ENCODE measurements at regions of chr18 and their contacts with region 1.

Region 1: GRCh38 chr18:45910405-45911023 is 56.6 kb downstream of the EPG5 start:
- DNase-seq: peak; percentile 47
- H3K4me3 ChIP-seq: no peak overlapping the region
- H3K27ac ChIP-seq: no peak overlapping the region
- H3K4me1 ChIP-seq: no peaks in the 10 kb centered on the region
- H3K27me3 ChIP-seq: no peaks in the 10 kb centered on the region
- CTCF ChIP-seq: peak in 3 of 4 experiments; percentile 62 to 81 (median 74)
- POLR2A ChIP-seq: no peak

Region 2: DNA sequence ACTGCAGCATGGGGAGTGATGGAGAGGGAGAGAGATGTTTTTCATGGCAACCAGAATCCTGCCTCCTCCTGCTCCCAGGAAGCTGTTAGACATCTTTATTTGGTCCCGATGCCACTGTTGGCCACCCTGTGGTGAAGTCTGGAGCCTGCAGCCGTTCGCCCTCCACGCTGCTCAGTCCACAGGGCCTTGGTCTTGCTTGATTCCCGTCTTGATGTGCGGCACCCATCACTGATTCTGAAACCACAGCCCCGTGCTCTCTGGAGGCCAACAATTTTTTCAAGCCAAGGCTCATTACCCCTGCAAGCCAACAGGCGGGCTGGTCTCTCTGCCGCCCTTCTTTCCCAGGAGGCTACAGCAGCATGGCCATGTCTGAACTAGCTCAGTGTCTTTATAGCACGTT is 60.5 kb before region 1 on chr18:
- intact Hi-C with region 1: loop called (anchors 10 kb)
- DNase-seq: no peak
- H3K4me3 ChIP-seq: no peak overlapping the region
- H3K27ac ChIP-seq: no peak overlapping the region
- H3K4me1 ChIP-seq: no peaks in the 10 kb centered on the region
- H3K27me3 ChIP-seq: no peaks in the 10 kb centered on the region
- CTCF ChIP-seq: peak in 3 of 4 experiments; percentile 11 to 33 (median 17)
- POLR2A ChIP-seq: no peak

Region 3: DNA sequence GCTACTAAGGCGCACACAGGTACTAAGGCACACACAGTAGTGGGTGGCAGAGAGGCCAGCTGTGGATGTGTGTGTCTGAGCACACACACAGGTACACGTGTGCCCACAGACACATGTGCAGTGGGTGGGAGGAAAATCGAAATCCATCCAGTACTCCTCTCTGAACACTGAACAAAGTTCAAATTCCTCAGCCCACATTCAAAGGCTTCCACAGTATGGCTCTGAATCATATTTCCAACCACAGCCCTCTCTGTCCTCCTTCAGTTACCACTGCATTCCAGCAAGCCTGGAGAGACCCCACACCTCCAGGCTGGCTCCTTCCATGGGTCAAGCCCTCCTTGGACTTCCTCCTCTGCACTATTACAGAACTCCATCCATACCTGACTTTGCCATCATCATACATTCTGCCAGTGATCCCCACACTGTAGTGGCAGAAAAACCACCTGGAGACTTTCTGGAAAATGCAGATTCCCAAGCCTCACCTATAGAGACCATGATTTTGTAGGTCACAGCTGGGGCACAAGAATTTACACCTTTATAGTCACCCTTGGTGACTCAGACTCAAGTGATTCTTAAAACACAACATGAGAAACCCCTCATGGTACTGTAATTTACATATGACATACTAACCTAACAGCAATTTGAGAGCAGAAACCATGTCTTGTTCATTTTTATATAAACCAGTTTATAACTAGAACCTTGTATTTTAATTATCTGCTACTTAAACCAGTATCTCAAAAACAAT is 25.2 kb after region 1 on chr18:
- intact Hi-C with region 1: no loop called
- DNase-seq: no peak
- H3K4me3 ChIP-seq: no peak overlapping the region
- H3K27ac ChIP-seq: no peak overlapping the region
- H3K4me1 ChIP-seq: no peaks in the 10 kb centered on the region
- H3K27me3 ChIP-seq: no peaks in the 10 kb centered on the region
- CTCF ChIP-seq: no peak
- POLR2A ChIP-seq: no peak

Region 4: GRCh38 chr18:46437061-46437460 is 526.5 kb after region 1 on chr18:
- intact Hi-C with region 1: no loop called
- DNase-seq: no peak
- H3K4me3 ChIP-seq: no peak overlapping the region
- H3K27ac ChIP-seq: no peak overlapping the region
- H3K4me1 ChIP-seq: no peaks in the 10 kb centered on the region
- H3K27me3 ChIP-seq: no peaks in the 10 kb centered on the region
- CTCF ChIP-seq: no peak
- POLR2A ChIP-seq: no peak